ENCODE measurements at regions of chr1 and their contacts with region 1.

Region 1: GRCh38 chr1:165597883-165598675 is 33.0 kb upstream of the MGST3 start:
- DNase-seq: peak; percentile 92 to 95
- ATAC-seq: peak; percentile 94 to 98
- H3K4me3 ChIP-seq: peak overlapping the region; percentile 57 to 72 (median 64)
- H3K27ac ChIP-seq: peak overlapping the region; percentile 20 to 71 (median 54)
- H3K4me1 ChIP-seq: peaks cover 12 to 14% of the 10 kb centered on the region in 2 donors
- H3K27me3 ChIP-seq: no peaks in the 10 kb centered on the region
- CTCF ChIP-seq: no peak
- POLR2A ChIP-seq: no peak

Region 2: DNA sequence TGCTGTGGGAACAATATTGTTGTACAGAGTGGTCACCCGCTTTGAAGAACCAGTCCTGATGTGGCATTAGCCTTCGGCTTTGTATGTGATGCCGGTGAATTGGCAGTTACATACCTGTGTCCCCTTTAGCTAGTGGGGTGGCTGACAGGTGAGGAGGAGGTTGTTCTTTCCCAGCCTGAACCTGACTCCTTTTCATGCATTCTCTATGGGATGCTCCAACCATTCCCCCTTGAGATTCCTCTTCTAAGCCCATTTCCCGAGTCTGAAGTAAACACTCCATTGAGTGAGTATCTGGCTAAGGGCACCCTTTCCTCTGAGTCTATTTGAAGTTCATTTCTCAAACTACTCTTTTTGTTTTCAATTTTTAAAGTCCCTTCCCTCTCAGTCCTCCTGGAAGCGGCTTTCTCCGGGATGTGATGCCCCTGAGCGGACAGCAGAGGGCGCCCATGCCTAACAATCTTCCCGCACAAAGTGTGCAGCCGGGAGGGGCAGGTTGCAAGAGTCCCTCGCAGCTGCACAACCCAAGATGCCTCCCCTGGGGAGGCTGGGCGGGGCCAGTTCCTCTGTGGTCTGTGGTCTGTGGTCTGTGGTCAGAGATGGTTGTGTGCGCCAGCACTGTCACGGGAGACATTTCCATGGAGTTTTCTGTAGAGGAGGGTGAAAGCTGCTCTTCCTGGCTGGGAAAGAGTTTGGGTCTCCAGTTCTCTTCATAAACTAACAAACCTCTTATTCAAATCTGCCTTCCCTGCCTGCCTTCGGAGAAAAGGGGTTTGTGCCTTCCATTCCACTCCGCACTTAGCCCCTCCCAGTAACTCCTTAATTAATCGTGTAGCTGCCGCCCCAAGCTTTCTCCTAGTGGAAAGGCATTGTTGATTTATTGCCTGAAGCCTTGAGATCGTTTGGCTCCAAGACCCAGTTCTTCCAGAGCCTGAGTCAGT is 205.2 kb before region 1 on chr1:
- in situ Hi-C with region 1: loop called in 2 of 4 experiments (anchors 5 kb)
- intact Hi-C with region 1: loop called (anchors 1 kb)
- DNase-seq: peak; percentile 68 to 77
- ATAC-seq: peak; percentile 79 to 86
- H3K4me3 ChIP-seq: peak overlapping the region in 2 of 4 donors; percentile 8 to 17
- H3K27ac ChIP-seq: no peak overlapping the region
- H3K4me1 ChIP-seq: peaks cover 6 to 9% of the 10 kb centered on the region in 2 donors
- H3K27me3 ChIP-seq: no peaks in the 10 kb centered on the region
- CTCF ChIP-seq: peak; percentile 87 to 97 (median 91)
- POLR2A ChIP-seq: no peak

Region 3: DNA sequence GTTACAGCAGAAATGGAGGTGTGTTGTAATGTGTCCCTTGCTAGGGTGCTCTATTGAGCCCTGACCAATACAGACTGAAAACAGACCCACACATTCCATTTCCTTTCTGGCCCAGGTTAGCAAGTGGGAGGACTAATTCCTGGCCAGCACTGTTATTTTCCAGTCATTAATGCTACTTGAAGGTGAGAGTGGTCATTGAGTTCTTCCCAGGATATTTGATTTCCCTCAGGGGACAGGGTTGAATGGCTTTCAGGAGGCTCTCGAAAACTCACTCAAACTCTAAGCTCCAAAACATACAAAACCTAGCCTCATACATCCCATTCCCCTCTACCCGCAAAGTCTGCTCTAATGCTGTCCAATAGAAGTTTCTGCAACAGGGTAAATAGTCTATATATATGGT is 48.1 kb before region 1 on chr1:
- in situ Hi-C with region 1: no loop called
- intact Hi-C with region 1: loop called (anchors 5 kb)
- DNase-seq: no peak
- ATAC-seq: no peak
- H3K4me3 ChIP-seq: no peak overlapping the region
- H3K27ac ChIP-seq: no peak overlapping the region
- H3K4me1 ChIP-seq: peaks cover 14 to 16% of the 10 kb centered on the region in 2 donors
- H3K27me3 ChIP-seq: no peaks in the 10 kb centered on the region
- CTCF ChIP-seq: no peak
- POLR2A ChIP-seq: no peak

Region 4: GRCh38 chr1:165703648-165704047 is 105.6 kb after region 1 on chr1:
- in situ Hi-C with region 1: loop called in 1 of 4 experiments (anchors 10 kb)
- intact Hi-C with region 1: loop called (anchors 2 kb)
- DNase-seq: no peak
- ATAC-seq: no peak
- H3K4me3 ChIP-seq: no peak overlapping the region
- H3K27ac ChIP-seq: no peak overlapping the region
- H3K4me1 ChIP-seq: peaks cover 0 to 3% of the 10 kb centered on the region in 2 donors
- H3K27me3 ChIP-seq: peaks cover 0 to 2% (median 0%) of the 10 kb centered on the region in 3 donors
- CTCF ChIP-seq: no peak
- POLR2A ChIP-seq: no peak

Region 5: DNA sequence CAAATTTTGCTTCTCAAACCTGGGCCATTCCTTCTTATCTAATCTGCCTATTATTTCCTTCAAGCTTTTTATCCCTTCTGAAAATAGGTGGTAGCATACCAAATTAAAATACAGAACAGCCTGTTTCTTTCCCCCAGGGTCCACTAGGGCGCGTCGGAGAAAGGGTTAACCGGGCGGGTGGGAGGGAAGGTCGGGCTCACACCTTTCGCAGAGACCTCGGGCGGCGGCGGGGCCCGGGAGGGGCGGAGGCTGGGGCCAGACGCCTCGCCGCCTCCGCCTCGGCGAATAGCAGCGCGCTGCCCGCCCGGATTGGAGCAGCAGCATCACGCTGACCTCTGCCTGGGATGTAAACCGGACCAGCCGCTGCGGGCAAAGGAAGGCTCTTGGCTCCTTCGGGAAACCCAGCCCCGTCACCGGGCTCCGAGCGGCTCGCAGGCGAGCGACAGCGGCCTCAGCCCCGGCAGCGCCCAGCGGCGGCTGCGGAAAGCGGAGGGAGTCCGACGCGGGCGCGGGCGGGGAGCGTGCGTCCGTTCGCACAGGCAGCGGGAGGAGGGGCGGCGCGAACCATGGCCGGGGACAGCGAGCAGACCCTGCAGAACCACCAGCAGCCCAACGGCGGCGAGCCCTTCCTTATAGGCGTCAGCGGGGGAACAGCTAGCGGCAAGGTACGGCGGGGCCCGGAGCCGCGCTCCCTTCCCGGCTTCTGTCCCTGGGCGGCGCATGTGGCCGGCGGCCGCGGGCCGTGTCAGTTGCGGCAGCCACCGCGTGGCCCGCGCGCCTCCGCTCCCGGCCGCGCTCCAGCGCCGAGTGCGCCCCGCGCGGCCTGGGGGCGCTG is 229.4 kb after region 1 on chr1 and contains the start of gene UCK2:
- in situ Hi-C with region 1: no loop called
- intact Hi-C with region 1: loop called (anchors 2 kb)
- DNase-seq: peak; percentile 72 to 81
- ATAC-seq: peak; percentile 82 to 86
- H3K4me3 ChIP-seq: peak within 1 kb of the TSS; percentile 78 to 99 (median 85)
- H3K27ac ChIP-seq: peak within 1 kb of the TSS; percentile 87 to 97 (median 96)
- H3K4me1 ChIP-seq: peaks cover 8 to 9% of the 10 kb centered on the region in 2 donors
- H3K27me3 ChIP-seq: no peaks in the 10 kb centered on the region
- CTCF ChIP-seq: peak in 4 of 5 experiments; percentile 15 to 45 (median 30)
- POLR2A ChIP-seq: peak; percentile 86 to 91
- total RNA-seq, gene UCK2: 14.0 to 32.7 (median 24.1) TPM

Measured in gastrocnemius medialis (tissue), 4 donors.